H1 (cell line): ENCODE measurements at regions of chr12 and their contacts with region 1.

Region 1: DNA sequence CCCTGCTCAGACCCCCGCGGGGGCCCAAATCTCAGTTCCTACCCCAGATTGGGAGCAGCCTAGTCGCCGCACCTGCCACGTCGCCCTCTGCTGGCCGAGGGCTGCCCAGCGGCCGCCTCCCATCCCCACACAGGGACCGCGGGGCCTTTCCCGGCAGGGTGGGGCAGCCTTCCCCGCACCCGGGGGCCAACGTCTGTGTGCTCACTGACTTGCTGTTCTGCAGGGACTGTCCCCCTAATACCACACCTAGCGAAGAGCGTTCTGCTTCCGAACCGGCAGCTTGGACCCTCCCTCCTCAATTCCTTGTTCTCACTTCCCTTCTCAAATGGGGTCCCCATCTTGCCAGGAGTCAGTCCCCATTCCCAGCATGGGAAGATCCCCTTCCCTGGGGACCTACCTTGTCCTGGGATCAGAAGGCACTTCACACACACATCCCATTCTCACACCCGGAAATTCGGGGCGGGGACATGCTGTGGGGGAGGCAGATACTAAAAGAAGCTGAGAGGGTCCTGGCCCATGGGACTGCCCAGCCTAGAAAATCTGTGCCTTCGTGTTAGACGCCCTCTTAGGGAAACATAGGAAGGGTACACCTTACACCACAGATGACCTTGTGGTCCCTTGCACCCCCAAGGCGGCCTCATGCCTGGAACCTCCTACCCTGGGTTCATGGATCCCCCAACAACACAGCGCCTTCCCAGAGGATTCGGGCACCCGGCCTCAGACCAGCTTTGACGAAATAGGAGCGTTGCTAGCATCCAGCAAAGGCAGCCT is 16.4 kb downstream of the ACVRL1 start:
- DNase-seq: peak in 1 of 2 experiments; percentile 93
- H3K4me3 ChIP-seq: peak overlapping the region in 2 of 4 experiments; percentile 3 to 42; a peak in 2 of 8 replicates
- H3K27ac ChIP-seq: no peak overlapping the region
- H3K4me1 ChIP-seq: peaks cover 2 to 12% (median 7%) of the 10 kb centered on the region in 4 experiments
- H3K27me3 ChIP-seq: peaks cover 0 to 8% (median 5%) of the 10 kb centered on the region in 4 experiments; a peak in 4 of 7 replicates
- CTCF ChIP-seq: peak; percentile 87 to 95 (median 92)
- EP300 ChIP-seq: no peak
- POLR2A ChIP-seq: no peak
- RAD21 ChIP-seq: peak; percentile 44 to 71

Region 2: DNA sequence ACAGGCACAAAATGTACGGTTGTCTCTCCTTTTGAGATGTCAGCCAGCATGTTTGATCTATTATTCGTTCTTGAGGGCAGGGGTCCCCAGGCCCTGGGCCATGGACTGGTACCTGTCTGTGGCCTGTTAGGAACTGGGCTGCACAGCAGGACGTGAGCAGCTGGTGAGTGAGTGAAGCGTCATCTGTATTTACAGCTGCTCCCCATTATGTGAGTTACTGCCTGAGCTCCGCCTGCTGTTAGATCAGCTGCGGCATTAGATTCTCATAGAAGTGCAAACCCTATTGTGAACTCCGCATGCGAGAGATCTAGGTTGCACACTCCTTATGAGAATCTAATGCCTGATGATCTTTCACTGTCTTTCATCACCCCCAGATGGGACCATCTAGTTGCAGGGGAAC is 374.0 kb before region 1 on chr12:
- CTCF ChIA-PET with region 1: no interaction called
- POLR2A ChIA-PET with region 1: no interaction called
- DNase-seq: no peak
- H3K4me3 ChIP-seq: no peak overlapping the region
- H3K27ac ChIP-seq: no peak overlapping the region
- H3K4me1 ChIP-seq: peaks cover 2 to 6% (median 3%) of the 10 kb centered on the region in 4 experiments; a peak in 5 of 7 replicates
- H3K27me3 ChIP-seq: no peaks in the 10 kb centered on the region
- CTCF ChIP-seq: no peak
- EP300 ChIP-seq: no peak
- POLR2A ChIP-seq: no peak
- RAD21 ChIP-seq: no peak

Region 3: DNA sequence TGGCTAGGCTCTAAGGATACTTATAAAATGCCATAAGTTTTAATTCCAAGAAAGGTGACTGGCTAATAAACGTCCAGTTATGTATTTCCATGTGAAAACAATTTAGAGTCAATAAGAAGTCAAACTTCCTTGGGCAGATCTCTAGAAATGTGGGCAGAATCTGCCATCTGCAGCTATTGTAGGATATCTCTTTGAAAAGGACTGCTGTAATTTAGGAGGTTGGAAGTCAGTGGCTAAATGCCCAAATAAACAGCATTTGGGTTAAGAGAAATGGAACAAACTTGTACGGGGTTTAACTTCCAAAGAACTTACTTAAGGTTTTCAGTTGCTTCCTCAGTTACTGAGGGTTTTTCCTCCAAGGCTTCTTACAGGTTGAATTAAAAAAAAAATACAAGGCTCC is 196.8 kb before region 1 on chr12:
- CTCF ChIA-PET with region 1: no interaction called
- POLR2A ChIA-PET with region 1: no interaction called
- DNase-seq: no peak
- H3K4me3 ChIP-seq: no peak overlapping the region
- H3K27ac ChIP-seq: no peak overlapping the region
- H3K4me1 ChIP-seq: no peaks in the 10 kb centered on the region
- H3K27me3 ChIP-seq: no peaks in the 10 kb centered on the region
- CTCF ChIP-seq: no peak
- EP300 ChIP-seq: no peak
- POLR2A ChIP-seq: no peak
- RAD21 ChIP-seq: no peak

Region 4: GRCh38 chr12:51871126-51871525 is 52.6 kb before region 1 on chr12:
- CTCF ChIA-PET with region 1: interaction called, 22 read pairs
- POLR2A ChIA-PET with region 1: interaction called, 3 read pairs
- DNase-seq: no peak
- H3K4me3 ChIP-seq: no peak overlapping the region
- H3K27ac ChIP-seq: no peak overlapping the region
- H3K4me1 ChIP-seq: peaks cover 4 to 30% (median 20%) of the 10 kb centered on the region in 4 experiments
- H3K27me3 ChIP-seq: peaks cover 0 to 29% (median 24%) of the 10 kb centered on the region in 4 experiments; a peak in 6 of 7 replicates
- CTCF ChIP-seq: peak in 2 of 3 experiments; percentile 6 to 31; a peak in 3 of 4 replicates
- EP300 ChIP-seq: no peak
- POLR2A ChIP-seq: no peak
- RAD21 ChIP-seq: peak in 1 of 2 experiments; percentile 9; a peak in 1 of 4 replicates

Region 5: GRCh38 chr12:51891843-51892242 is 31.8 kb before region 1 on chr12:
- CTCF ChIA-PET with region 1: interaction called, 140 read pairs
- POLR2A ChIA-PET with region 1: no interaction called
- DNase-seq: no peak
- H3K4me3 ChIP-seq: no peak overlapping the region
- H3K27ac ChIP-seq: no peak overlapping the region
- H3K4me1 ChIP-seq: peaks cover 0 to 12% (median 5%) of the 10 kb centered on the region in 4 experiments; a peak in 6 of 7 replicates
- H3K27me3 ChIP-seq: peaks cover 0 to 10% (median 6%) of the 10 kb centered on the region in 4 experiments; a peak in 3 of 7 replicates
- CTCF ChIP-seq: peak in 1 of 3 experiments; percentile 13; a peak in 1 of 4 replicates
- EP300 ChIP-seq: no peak
- POLR2A ChIP-seq: no peak
- RAD21 ChIP-seq: peak in 1 of 2 experiments; percentile 16; a peak in 2 of 4 replicates

Region 6: GRCh38 chr12:51941011-51941581 is 17.4 kb after region 1 on chr12:
- CTCF ChIA-PET with region 1: interaction called, 106 read pairs
- POLR2A ChIA-PET with region 1: interaction called, 4 read pairs
- DNase-seq: no peak
- H3K4me3 ChIP-seq: no peak overlapping the region
- H3K27ac ChIP-seq: no peak overlapping the region
- H3K4me1 ChIP-seq: peaks cover 0 to 2% (median 0%) of the 10 kb centered on the region in 4 experiments; a peak in 3 of 7 replicates
- H3K27me3 ChIP-seq: no peaks in the 10 kb centered on the region
- CTCF ChIP-seq: no peak
- EP300 ChIP-seq: no peak
- POLR2A ChIP-seq: no peak
- RAD21 ChIP-seq: no peak

Region 7: GRCh38 chr12:51970904-51971646 is 47.4 kb after region 1 on chr12:
- CTCF ChIA-PET with region 1: interaction called, 47 read pairs
- POLR2A ChIA-PET with region 1: no interaction called
- DNase-seq: peak in 1 of 2 experiments; percentile 62
- H3K4me3 ChIP-seq: no peak overlapping the region
- H3K27ac ChIP-seq: no peak overlapping the region
- H3K4me1 ChIP-seq: peaks cover 3 to 10% (median 6%) of the 10 kb centered on the region in 4 experiments; a peak in 5 of 7 replicates
- H3K27me3 ChIP-seq: no peaks in the 10 kb centered on the region
- CTCF ChIP-seq: peak; percentile 85 to 97 (median 95)
- EP300 ChIP-seq: no peak
- POLR2A ChIP-seq: no peak
- RAD21 ChIP-seq: peak; percentile 34 to 50

Region 8: GRCh38 chr12:51994959-51995358 is 71.3 kb after region 1 on chr12:
- CTCF ChIA-PET with region 1: interaction called, 18 read pairs
- POLR2A ChIA-PET with region 1: no interaction called
- DNase-seq: no peak
- H3K4me3 ChIP-seq: no peak overlapping the region
- H3K27ac ChIP-seq: no peak overlapping the region
- H3K4me1 ChIP-seq: peaks cover 0 to 2% (median under 1%) of the 10 kb centered on the region in 4 experiments; a peak in 3 of 7 replicates
- H3K27me3 ChIP-seq: no peaks in the 10 kb centered on the region
- CTCF ChIP-seq: no peak
- EP300 ChIP-seq: no peak
- POLR2A ChIP-seq: no peak
- RAD21 ChIP-seq: no peak

Region 9: DNA sequence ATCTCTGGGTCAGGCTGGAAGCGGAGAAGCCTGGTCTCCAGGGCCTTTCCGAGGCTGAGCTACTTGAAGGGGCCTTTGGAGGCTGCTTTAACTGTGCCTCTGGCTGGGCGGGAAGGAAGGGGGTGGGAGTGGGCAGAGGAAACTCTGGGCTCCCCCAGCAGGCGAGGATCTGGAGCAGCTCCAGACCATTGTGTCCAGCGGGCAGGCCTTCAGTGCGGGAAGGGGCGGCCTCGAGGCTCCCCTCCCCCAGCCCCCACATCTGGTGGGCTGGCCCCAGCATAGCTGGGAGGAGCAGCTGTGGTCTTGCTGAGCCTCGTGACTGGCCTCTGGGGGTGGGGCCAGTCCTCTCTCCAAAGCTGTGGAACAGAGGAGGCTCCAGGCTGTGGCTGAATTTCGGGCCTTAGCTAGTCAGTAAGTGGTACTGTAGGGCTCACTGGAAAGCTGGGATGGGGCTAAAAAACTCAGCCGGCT is 86.5 kb after region 1 on chr12:
- CTCF ChIA-PET with region 1: interaction called, 20 read pairs
- POLR2A ChIA-PET with region 1: no interaction called
- DNase-seq: peak; percentile 67 to 79
- H3K4me3 ChIP-seq: peak overlapping the region in 1 of 4 experiments; percentile 32; a peak in 1 of 8 replicates
- H3K27ac ChIP-seq: no peak overlapping the region; the same call in 1 of the 2 replicates
- H3K4me1 ChIP-seq: peaks cover 5 to 45% (median 24%) of the 10 kb centered on the region in 4 experiments
- H3K27me3 ChIP-seq: peaks cover 18 to 64% (median 56%) of the 10 kb centered on the region in 4 experiments
- CTCF ChIP-seq: no peak
- EP300 ChIP-seq: no peak; a peak in 1 of 3 replicates
- POLR2A ChIP-seq: peak in 1 of 2 experiments; percentile 47; a peak in 1 of 3 replicates
- RAD21 ChIP-seq: no peak

Region 10: DNA sequence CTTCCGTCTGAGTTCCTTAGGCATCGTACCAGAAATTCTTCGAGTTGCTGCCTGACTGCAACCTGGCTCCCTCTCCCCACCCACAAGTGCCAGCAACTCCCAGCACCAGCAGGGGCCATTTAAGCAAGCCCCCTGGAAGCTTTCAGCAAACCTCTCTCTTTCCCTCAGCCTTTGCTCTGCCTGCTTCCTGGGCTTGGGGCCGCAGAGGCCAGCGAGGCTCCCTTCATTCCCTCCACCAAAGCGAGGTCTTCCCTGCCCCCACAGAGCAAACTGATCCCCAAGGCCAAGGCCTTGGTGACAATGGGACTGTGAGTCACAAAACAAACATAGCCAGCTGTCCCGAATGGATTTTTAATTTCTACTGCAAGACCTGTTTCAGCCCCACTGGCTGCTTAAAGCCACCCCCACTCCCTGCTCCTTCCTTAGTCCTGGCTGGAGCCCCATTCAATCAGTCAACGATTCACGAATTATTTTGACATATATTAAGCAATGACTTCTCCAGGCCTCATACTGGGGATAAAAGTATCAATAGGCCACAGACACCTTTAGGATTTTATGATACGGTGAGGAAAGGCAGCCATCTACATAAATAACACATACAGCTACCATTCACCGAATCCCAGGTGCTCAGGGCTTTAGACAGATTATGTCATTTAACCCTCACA is 323.7 kb after region 1 on chr12:
- CTCF ChIA-PET with region 1: no interaction called
- POLR2A ChIA-PET with region 1: no interaction called
- DNase-seq: no peak
- H3K4me3 ChIP-seq: no peak overlapping the region
- H3K27ac ChIP-seq: no peak overlapping the region
- H3K4me1 ChIP-seq: peaks cover 0 to 12% (median 5%) of the 10 kb centered on the region in 4 experiments; a peak in 5 of 7 replicates
- H3K27me3 ChIP-seq: peaks cover 4 to 28% (median 22%) of the 10 kb centered on the region in 4 experiments
- CTCF ChIP-seq: no peak
- EP300 ChIP-seq: no peak
- POLR2A ChIP-seq: no peak
- RAD21 ChIP-seq: no peak

Region 11: DNA sequence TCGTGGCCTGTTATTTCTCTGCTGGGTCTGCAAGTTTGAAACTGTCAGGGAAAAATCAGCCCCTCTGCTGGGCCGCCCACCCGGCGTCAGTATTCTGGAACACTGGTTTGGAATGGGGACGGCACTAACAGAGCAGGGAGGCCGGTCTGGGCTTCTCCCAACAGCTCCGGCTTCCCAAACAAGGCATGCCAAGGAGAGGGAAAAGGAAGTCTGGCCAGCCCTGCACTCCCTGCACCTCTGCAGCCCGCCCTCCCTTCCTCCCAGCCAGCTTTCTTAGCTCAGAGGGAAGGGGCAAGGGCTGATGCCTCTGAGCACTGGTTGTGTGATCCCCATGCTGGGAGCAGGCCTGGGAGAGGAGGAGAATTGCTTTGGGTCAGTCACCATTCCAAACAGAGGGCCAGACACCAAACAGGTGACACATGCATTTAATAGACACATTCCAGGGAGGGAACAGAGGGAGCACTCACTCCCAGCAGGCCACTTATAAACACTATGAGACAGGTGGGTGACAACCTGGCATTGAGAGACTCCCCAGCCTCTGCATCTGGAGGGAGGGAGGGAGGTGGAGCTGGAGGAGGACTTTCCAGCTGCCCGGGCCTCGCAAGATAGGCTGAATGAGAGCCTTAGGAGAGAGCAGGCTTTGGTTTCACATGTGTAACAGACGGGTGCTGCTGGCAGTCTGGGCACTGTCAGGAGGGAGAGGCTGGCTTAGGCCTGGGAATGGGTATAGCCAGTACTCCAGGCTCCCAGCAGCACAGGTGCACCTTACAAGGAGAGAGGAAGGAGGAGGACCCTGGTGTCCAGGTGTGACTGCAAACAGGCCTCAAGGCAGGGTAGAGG is 500.2 kb after region 1 on chr12:
- CTCF ChIA-PET with region 1: no interaction called
- POLR2A ChIA-PET with region 1: no interaction called
- DNase-seq: no peak
- H3K4me3 ChIP-seq: no peak overlapping the region
- H3K27ac ChIP-seq: no peak overlapping the region
- H3K4me1 ChIP-seq: no peaks in the 10 kb centered on the region; a peak in 2 of 7 replicates
- H3K27me3 ChIP-seq: no peaks in the 10 kb centered on the region
- CTCF ChIP-seq: no peak
- EP300 ChIP-seq: no peak
- POLR2A ChIP-seq: no peak
- RAD21 ChIP-seq: no peak